Prostate gland (tissue), 2 donors: ENCODE measurements at regions of chr12 and their contacts with region 1.

Region 1: GRCh38 chr12:57846577-57847319 is at the start of gene CTDSP2:
- DNase-seq: peak; percentile 100
- H3K4me3 ChIP-seq: peak within 1 kb of the TSS; percentile 99 to 100
- H3K27ac ChIP-seq: peak within 1 kb of the TSS; percentile 98 to 100
- H3K4me1 ChIP-seq: peaks cover 20% of the 10 kb centered on the region
- H3K27me3 ChIP-seq: no peaks in the 10 kb centered on the region
- CTCF ChIP-seq: peak in 1 of 4 experiments; percentile 6
- POLR2A ChIP-seq: peak; percentile 95
- total RNA-seq, gene CTDSP2: 99.2 to 159 TPM

Region 2: DNA sequence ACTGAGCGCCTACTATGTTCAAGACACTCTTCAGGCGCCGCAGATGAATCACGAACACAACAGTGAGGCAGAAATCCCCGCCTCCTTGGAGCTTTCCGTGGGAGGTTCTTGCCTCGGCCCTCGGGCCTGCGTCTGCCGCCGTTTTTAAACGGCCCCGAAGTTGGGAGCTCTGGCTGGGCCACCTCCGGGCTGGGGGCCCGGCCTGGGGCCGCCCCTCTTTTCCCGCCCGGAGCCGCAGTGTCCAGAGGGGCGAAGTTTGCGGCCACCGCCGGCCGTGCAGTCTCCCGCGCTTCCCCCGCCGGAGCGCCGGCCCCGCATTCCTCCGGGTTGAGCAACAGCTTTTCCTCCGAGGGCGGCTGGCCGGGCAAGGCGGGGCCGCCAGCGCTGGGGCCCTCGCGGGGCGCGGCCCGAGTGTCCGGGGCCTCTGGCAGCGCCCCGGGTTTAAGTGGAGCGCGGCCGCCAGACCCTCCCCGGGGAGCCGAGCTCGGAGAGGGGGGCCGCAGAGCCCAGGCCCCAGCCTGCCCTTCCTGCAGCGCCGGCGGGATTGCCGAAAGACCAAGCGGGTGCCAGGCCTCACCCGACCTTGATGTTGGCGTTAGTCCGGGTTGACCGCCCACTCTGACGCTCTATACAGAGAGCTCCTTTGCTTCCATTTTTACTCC is 18.5 kb after region 1 on chr12:
- intact Hi-C with region 1: loop called (anchors 2 kb)
- DNase-seq: peak; percentile 64
- H3K4me3 ChIP-seq: peak overlapping the region; percentile 42 to 46
- H3K27ac ChIP-seq: peak overlapping the region; percentile 82 to 91
- H3K4me1 ChIP-seq: peaks cover 7% of the 10 kb centered on the region
- H3K27me3 ChIP-seq: no peaks in the 10 kb centered on the region
- CTCF ChIP-seq: peak in 2 of 4 experiments; percentile 8 to 10
- POLR2A ChIP-seq: peak; percentile 33

Region 3: GRCh38 chr12:57893431-57894353 is 46.9 kb after region 1 on chr12:
- intact Hi-C with region 1: loop called (anchors 2 kb)
- DNase-seq: peak; percentile 80
- H3K4me3 ChIP-seq: no peak overlapping the region
- H3K27ac ChIP-seq: peak overlapping the region; percentile 89 to 90
- H3K4me1 ChIP-seq: peaks cover 28% of the 10 kb centered on the region
- H3K27me3 ChIP-seq: no peaks in the 10 kb centered on the region
- CTCF ChIP-seq: peak in 1 of 4 experiments; percentile 34
- POLR2A ChIP-seq: no peak